Mammary epithelial cell (primary cell): ENCODE measurements at regions of chr4 and their contacts with region 1.

Region 1: GRCh38 chr4:26267087-26267486 is 53.7 kb upstream of the RBPJ start:
- DNase-seq: no peak
- H3K4me3 ChIP-seq: no peak overlapping the region
- H3K27ac ChIP-seq: no peak overlapping the region
- H3K4me1 ChIP-seq: no peaks in the 10 kb centered on the region
- H3K27me3 ChIP-seq: peaks cover 3% of the 10 kb centered on the region
- CTCF ChIP-seq: no peak

Region 2: DNA sequence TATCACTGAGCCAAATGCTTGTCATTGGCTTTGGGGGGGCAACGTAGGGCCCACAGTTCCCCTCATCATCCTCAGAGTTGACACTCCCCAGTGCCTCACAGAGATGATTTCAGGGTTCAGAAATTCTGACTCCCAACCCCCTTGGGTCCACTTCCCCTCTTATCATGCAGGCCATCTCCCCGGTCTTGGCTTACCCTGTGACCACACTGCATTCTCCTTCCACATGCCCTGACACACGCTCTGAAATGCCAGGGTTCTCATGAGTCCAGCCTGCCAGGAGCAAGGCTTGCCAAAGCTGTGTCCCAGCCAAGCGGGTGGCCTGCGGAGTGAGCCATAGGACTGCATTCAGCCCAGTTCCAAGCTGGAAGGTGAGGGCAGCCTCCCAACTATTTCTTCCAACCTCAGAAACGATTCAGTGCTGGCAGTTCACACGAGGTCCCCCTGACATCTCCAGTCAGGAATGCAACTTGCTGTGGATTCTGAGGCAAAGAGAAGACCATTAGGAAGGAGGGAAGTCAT is 251.9 kb before region 1 on chr4:
- CTCF ChIA-PET with region 1: no interaction called
- dilution Hi-C with region 1: no loop called
- in situ Hi-C with region 1: no loop called
- intact Hi-C with region 1: no loop called
- DNase-seq: no peak
- H3K4me3 ChIP-seq: no peak overlapping the region
- H3K27ac ChIP-seq: no peak overlapping the region
- H3K4me1 ChIP-seq: no peaks in the 10 kb centered on the region
- H3K27me3 ChIP-seq: peaks cover 5% of the 10 kb centered on the region
- CTCF ChIP-seq: no peak

Region 3: DNA sequence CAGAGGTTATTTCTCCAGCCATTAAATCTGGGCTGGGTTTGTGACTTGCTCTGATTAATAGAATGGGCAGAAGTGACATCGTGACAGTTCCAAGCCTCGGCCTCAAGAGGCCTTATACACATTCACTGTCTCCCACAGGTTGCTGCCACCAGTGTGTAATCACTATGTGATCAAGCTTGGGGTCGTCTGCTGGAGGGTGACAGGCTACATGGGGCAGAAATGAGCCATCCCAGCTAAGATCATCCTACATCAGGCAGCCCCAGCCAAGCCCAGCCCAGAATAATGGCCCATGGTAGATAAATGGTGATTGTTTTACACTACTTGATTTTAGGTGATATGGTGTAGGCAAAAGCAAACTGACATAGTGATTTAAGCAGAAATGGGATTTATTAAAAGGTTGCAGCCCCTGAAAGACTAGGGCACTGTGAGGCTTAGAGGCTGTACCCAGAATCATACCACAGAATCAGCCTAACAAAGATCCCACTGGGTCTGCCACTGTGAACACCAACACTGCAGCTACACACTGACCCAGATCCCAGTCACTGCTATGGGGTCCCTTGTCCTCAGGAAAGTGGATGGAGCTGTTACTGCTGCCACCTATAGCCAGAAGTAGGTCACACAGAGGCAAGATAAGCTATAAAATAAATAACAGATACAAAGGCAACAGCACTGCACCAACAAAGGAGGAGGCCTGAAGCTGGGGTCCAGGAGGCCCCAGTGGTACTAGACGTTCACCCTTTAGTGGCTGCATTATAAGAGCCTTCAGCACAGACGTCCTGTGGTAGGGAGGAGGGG is 105.9 kb before region 1 on chr4:
- CTCF ChIA-PET with region 1: no interaction called
- dilution Hi-C with region 1: loop called (anchors 5 kb)
- in situ Hi-C with region 1: no loop called
- intact Hi-C with region 1: no loop called
- DNase-seq: no peak
- H3K4me3 ChIP-seq: no peak overlapping the region
- H3K27ac ChIP-seq: no peak overlapping the region
- H3K4me1 ChIP-seq: no peaks in the 10 kb centered on the region
- H3K27me3 ChIP-seq: no peaks in the 10 kb centered on the region
- CTCF ChIP-seq: no peak